ENCODE measurements at regions of chr22 and their contacts with region 1.

Region 1: GRCh38 chr22:26740253-26740652 is 82.9 kb downstream of the MIAT start:
- DNase-seq: no peak
- H3K4me3 Mint-ChIP-seq: no peak overlapping the region
- H3K27ac Mint-ChIP-seq: no peak overlapping the region
- H3K4me1 Mint-ChIP-seq: peaks cover 4% of the 10 kb centered on the region
- H3K27me3 Mint-ChIP-seq: no peaks in the 10 kb centered on the region
- CTCF ChIP-seq: no peak

Region 2: GRCh38 chr22:26428515-26429457 is 311.5 kb before region 1 on chr22 and contains the start of gene ASPHD2:
- CTCF ChIA-PET with region 1: no interaction called
- intact Hi-C with region 1: no loop called
- DNase-seq: peak; percentile 59
- H3K4me3 Mint-ChIP-seq: peak within 1 kb of the TSS; percentile 84
- H3K27ac Mint-ChIP-seq: peak within 1 kb of the TSS; percentile 37
- H3K4me1 Mint-ChIP-seq: no peaks in the 10 kb centered on the region
- H3K27me3 Mint-ChIP-seq: peaks cover 89% of the 10 kb centered on the region
- CTCF ChIP-seq: no peak
- total RNA-seq, gene ASPHD2: 0.40 and 0.71 TPM in 2 replicates

Region 3: GRCh38 chr22:26672590-26673468 is 67.4 kb before region 1 on chr22:
- CTCF ChIA-PET with region 1: no interaction called
- intact Hi-C with region 1: loop called (anchors 10 kb)
- DNase-seq: peak; percentile 84
- H3K4me3 Mint-ChIP-seq: peak overlapping the region; percentile 74
- H3K27ac Mint-ChIP-seq: peak overlapping the region; percentile 91
- H3K4me1 Mint-ChIP-seq: peaks cover 30% of the 10 kb centered on the region
- H3K27me3 Mint-ChIP-seq: peaks cover 10% of the 10 kb centered on the region
- CTCF ChIP-seq: no peak

Region 4: GRCh38 chr22:26679003-26679629 is 61.1 kb before region 1 on chr22:
- CTCF ChIA-PET with region 1: interaction called, 13 read pairs
- intact Hi-C with region 1: loop called (anchors 10 kb)
- DNase-seq: peak; percentile 79
- H3K4me3 Mint-ChIP-seq: no peak overlapping the region
- H3K27ac Mint-ChIP-seq: no peak overlapping the region
- H3K4me1 Mint-ChIP-seq: peaks cover 10% of the 10 kb centered on the region
- H3K27me3 Mint-ChIP-seq: no peaks in the 10 kb centered on the region
- CTCF ChIP-seq: peak; percentile 86

Region 5: GRCh38 chr22:26756675-26757293 is 16.5 kb after region 1 on chr22:
- CTCF ChIA-PET with region 1: interaction called, 10 read pairs
- intact Hi-C with region 1: no loop called
- DNase-seq: peak; percentile 73
- H3K4me3 Mint-ChIP-seq: peak overlapping the region; percentile 54
- H3K27ac Mint-ChIP-seq: no peak overlapping the region
- H3K4me1 Mint-ChIP-seq: no peaks in the 10 kb centered on the region
- H3K27me3 Mint-ChIP-seq: no peaks in the 10 kb centered on the region
- CTCF ChIP-seq: peak; percentile 95